ENCODE measurements at regions of chr5 and their contacts with region 1.

Region 1: GRCh38 chr5:25255136-25255535 is 610.4 kb upstream of the CDH10 start:
- DNase-seq: no peak
- ATAC-seq: no peak

Region 2: DNA sequence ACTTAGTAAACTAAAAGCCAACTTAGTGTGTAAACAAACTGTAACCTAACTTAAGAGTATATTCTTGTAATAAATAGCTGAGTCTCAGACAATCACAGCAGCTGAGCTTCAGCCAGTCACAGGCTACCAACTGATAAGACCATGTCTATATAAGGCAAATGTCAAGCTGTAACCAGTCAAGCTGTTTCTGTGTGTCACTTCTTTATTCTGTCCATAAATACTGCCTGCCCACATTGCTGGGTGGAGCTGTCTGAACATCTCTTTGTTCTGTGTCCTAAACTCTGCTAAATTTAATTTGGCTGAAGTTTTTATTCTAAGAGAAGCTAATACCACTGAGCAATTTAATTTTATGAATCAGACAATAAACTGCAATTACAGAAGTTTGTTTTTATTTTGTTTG is 198.3 kb before region 1 on chr5:
- intact Hi-C with region 1: loop called (anchors 5 kb)
- DNase-seq: no peak
- ATAC-seq: no peak

Region 3: GRCh38 chr5:25991639-25992038 is 736.5 kb after region 1 on chr5:
- intact Hi-C with region 1: loop called (anchors 5 kb)
- DNase-seq: no peak
- ATAC-seq: no peak